Posterior vena cava (tissue), 2 donors: ENCODE measurements at regions of chr5 and their contacts with region 1.

Region 1: GRCh38 chr5:58972301-58972700 is 389.4 kb downstream of the RAB3C start:
- DNase-seq: no peak

Region 2: DNA sequence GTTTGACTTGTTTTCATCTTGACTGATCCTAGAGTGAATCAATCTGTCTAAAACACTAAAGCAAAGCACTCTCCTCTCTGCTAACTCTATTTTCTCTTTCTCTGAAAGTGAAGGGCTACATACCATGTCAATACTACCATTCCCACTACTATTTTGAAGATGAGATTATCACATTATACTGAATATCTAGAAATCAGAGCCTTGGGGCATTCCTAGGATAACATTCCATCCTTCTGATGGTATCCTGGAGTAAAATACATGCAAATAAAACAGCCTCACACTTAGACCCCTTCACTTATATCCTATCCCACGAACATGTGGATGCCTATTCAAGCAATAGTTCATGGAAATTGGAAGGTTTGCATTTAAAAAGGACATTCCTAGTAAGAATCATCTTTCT is 1180.4 kb before region 1 on chr5:
- intact Hi-C with region 1: loop called in 1 of 2 experiments (anchors 10 kb)
- DNase-seq: no peak